ENCODE measurements at regions of chr2 and their contacts with region 1.

Region 1: DNA sequence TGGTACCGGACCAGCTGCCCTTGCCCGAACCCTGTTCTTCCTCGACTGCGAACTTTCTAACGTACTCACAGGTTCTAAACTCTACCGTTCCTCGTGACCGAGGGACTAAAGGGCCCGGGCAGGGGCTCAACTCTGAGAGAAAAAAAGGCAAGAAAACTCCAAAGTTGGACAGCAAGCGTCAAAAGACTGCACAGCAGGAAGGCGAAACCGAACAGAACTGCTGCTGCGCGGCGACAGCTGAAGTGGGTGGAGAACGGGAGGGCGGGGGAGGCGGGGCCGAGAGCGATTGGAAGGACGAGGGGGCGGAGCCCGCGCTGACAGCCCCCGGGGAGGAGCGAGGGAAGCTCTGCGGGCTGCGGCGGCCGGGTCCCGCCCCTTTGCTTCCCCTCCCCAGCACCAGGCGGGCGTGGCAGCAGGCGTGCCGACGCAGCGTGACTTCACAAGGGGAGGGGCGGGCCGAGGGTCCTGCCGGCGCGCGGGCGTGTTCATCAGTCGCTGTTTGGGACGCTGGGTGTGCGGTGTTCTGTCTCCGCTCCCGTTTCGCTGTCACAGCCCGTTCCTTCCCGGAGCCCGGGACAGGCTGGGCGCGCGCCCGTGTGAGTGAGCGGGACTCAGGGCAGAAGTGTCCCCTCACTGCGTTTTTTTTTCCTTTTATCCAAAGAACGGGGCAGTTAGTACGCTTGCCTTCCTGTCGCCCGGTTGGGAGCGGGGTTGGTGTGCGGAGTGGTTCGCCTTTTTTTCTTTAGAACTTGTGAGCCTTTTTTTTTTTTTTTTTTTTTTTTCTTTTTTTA is at the start of gene NABP1:
- DNase-seq: peak; percentile 99
- H3K4me3 Mint-ChIP-seq: peak within 1 kb of the TSS; percentile 88
- H3K27ac Mint-ChIP-seq: peak within 1 kb of the TSS; percentile 98
- H3K4me1 Mint-ChIP-seq: peaks cover 50% of the 10 kb centered on the region
- H3K27me3 Mint-ChIP-seq: no peaks in the 10 kb centered on the region
- total RNA-seq, gene NABP1: 73.5 to 73.7 TPM

Region 2: GRCh38 chr2:191066197-191066918 is 611.5 kb before region 1 on chr2:
- CTCF ChIA-PET with region 1: no interaction called
- POLR2A ChIA-PET with region 1: interaction called, 48 read pairs
- DNase-seq: peak; percentile 23
- H3K4me3 Mint-ChIP-seq: peak overlapping the region; percentile 80
- H3K27ac Mint-ChIP-seq: peak overlapping the region; percentile 84
- H3K4me1 Mint-ChIP-seq: peaks cover 78% of the 10 kb centered on the region
- H3K27me3 Mint-ChIP-seq: no peaks in the 10 kb centered on the region

Region 3: DNA sequence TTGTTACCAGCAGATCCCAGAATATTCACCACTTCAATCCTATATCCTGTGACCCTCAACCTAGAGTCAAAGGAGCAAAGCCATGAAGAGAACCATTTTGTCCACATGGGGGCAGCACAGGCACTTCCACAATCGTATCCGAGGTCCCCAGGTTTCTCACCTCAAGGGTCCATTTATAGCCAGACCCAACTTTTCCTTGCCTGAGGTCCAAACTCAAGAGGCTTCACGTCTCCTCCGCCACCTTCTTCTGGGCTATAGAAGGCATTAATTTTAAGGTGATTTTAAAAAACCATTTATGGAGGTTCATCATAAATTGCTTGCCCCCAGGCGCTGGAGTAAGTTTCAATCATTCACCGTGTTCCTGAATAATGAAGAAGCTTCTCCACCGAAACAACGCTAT is 111.5 kb before region 1 on chr2:
- CTCF ChIA-PET with region 1: interaction called, 21 read pairs
- POLR2A ChIA-PET with region 1: interaction called, 112 read pairs
- DNase-seq: peak; percentile 67
- H3K4me3 Mint-ChIP-seq: no peak overlapping the region
- H3K27ac Mint-ChIP-seq: no peak overlapping the region
- H3K4me1 Mint-ChIP-seq: peaks cover 49% of the 10 kb centered on the region
- H3K27me3 Mint-ChIP-seq: peaks cover 42% of the 10 kb centered on the region

Region 4: DNA sequence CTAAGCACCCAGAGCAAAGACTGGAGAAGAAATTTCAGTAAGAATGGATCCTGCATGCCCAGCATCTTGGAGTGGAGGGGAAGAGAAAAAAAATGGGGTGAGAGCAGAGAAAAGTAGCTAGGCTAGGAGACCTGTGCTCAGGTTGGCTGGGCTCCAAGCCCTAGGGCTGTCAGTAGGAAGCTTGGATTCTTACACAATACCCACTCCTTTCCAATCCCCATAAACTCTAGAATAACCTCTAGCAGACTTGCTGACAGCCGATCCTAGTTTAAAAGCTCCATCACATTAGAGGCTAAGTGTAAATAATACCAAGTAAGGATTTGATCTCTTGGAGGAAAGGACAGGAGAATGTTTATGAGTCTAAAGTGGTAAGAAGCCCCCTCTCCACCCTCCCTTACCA is 46.1 kb before region 1 on chr2:
- CTCF ChIA-PET with region 1: interaction called, 13 read pairs
- POLR2A ChIA-PET with region 1: interaction called, 298 read pairs
- DNase-seq: no peak
- H3K4me3 Mint-ChIP-seq: no peak overlapping the region
- H3K27ac Mint-ChIP-seq: no peak overlapping the region
- H3K4me1 Mint-ChIP-seq: peaks cover 27% of the 10 kb centered on the region
- H3K27me3 Mint-ChIP-seq: peaks cover 32% of the 10 kb centered on the region

Region 5: GRCh38 chr2:191660575-191661388 is 17.1 kb before region 1 on chr2:
- CTCF ChIA-PET with region 1: interaction called, 3 read pairs
- POLR2A ChIA-PET with region 1: interaction called, 58 read pairs
- DNase-seq: no peak
- H3K4me3 Mint-ChIP-seq: no peak overlapping the region
- H3K27ac Mint-ChIP-seq: no peak overlapping the region
- H3K4me1 Mint-ChIP-seq: peaks cover 21% of the 10 kb centered on the region
- H3K27me3 Mint-ChIP-seq: no peaks in the 10 kb centered on the region

Region 6: GRCh38 chr2:191740016-191740419 is 62.2 kb after region 1 on chr2:
- CTCF ChIA-PET with region 1: no interaction called
- POLR2A ChIA-PET with region 1: interaction called, 11 read pairs
- DNase-seq: peak; percentile 46
- H3K4me3 Mint-ChIP-seq: no peak overlapping the region
- H3K27ac Mint-ChIP-seq: peak overlapping the region; percentile 44
- H3K4me1 Mint-ChIP-seq: peaks cover 13% of the 10 kb centered on the region
- H3K27me3 Mint-ChIP-seq: peaks cover 3% of the 10 kb centered on the region

Measured in activated CD4-positive, alpha-beta memory T cell treated with anti-CD3 and anti-CD28 coated beads, Interleukin-2, amount 10 ng/mL, durations not matched to agents 7 days and 5 days (primary cell).